ENCODE measurements at regions of chr5 and their contacts with region 1.

Region 1: DNA sequence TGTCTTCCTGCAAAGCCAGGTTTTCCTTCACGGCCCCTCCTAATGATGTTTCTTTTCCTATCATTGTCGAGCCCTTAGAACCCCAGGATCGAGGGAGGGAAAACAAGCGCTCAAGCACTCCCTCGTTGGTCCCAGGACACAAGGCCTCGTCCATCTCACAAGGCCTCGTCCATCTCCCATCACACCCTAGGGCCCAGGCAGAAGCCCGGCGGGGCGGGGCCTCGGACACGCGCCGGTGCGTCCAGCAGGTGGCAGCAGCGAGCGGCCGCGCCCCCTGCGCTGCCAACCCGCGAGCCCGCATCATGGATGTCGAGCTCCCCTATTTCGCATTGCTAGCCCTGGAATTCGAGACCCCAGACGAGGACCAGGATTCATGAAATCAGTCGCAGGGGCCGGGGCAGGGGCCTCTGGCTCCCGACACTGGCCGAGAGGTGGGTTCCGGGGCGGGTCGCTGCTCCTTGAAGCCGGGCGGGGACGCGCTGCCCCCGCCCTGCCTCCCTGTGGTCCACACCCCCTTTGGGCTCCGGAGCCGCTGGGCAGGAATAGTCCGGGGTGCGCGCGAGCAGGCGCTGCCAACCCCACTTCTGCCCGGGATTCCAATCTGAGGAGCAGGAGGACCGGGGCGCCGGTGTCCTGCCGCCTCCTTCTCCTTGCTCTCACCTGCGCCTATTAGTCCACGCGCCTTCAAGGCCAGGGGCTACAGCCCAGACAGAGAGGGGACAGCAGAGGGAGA is at the start of gene ABLIM3:
- DNase-seq: peak; percentile 77
- ATAC-seq: peak; percentile 90
- total RNA-seq, gene ABLIM3: 106 to 129 TPM

Region 2: GRCh38 chr5:148984333-148984732 is 157.1 kb before region 1 on chr5:
- intact Hi-C with region 1: no loop called
- DNase-seq: no peak
- ATAC-seq: no peak

Region 3: GRCh38 chr5:149175346-149176105 is 34.1 kb after region 1 on chr5:
- intact Hi-C with region 1: loop called in 1 of 2 experiments (anchors 5 kb)
- DNase-seq: peak; percentile 80
- ATAC-seq: peak; percentile 86 to 93

Region 4: DNA sequence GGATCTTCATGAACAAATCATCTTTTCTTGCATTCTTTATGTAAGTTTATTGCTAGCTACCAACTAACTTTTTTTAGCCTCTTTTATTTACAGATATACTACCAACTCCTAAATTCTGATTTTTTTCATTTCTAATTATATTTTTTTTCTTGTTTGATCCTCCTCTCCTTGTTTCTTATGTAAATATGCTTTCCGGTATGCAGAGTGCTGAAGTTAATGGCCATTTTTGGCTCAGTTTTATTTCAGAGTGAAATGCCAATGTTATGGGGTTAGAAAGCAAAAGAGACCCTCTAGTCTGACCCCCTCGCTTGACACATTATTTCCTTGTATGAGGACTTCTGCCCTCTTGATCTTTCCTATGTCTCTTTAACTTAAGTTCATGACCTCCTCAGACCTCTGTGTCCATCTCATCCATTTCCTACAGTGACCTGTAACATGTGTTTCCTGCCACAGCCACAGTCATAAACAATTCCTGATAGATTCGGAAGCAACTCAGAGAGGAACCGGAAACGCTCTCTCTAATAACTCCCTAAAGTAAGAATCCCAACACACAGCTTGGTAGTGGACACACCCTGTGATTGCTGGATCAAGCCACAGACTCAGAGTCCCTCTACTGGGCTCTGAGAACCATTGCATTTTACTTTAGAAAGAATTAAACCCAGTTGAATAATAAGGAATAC is 87.4 kb after region 1 on chr5:
- intact Hi-C with region 1: loop called (anchors 2 to 5 kb)
- DNase-seq: peak; percentile 56
- ATAC-seq: peak; percentile 96 to 97

Region 5: GRCh38 chr5:149561848-149562247 is 420.5 kb after region 1 on chr5:
- intact Hi-C with region 1: loop called in 1 of 2 experiments (anchors 10 kb)
- DNase-seq: no peak
- ATAC-seq: peak; percentile 87 to 95

Measured in left cardiac atrium (tissue), 4 donors.